ENCODE measurements at regions of chr18 and their contacts with region 1.

Region 1: GRCh38 chr18:13268158-13269012 is 49.8 kb downstream of the LDLRAD4 start:
- DNase-seq: no peak
- ATAC-seq: no peak

Region 2: GRCh38 chr18:13221869-13222855 is 46.2 kb before region 1 on chr18:
- intact Hi-C with region 1: loop called in 1 of 2 experiments (anchors 2 kb)
- DNase-seq: peak; percentile 81
- ATAC-seq: peak; percentile 39 to 60

Measured in left cardiac atrium (tissue), 4 donors.